Naive thymus-derived CD4-positive, alpha-beta T cell (primary cell): ENCODE measurements at regions of chr1 and their contacts with region 1.

Region 1: GRCh38 chr1:12434174-12434573 is 183.8 kb downstream of the DHRS3 start:
- DNase-seq: peak in 6 of 9 donors; percentile 32 to 70 (median 46)
- ATAC-seq: peak; percentile 79
- H3K4me3 ChIP-seq: peak overlapping the region; percentile 44
- H3K4me3 Mint-ChIP-seq: peak overlapping the region; percentile 54 to 76 (median 70)
- H3K27ac ChIP-seq: peak overlapping the region; percentile 58
- H3K27ac Mint-ChIP-seq: peak overlapping the region; percentile 69 to 92 (median 84)
- H3K4me1 ChIP-seq: peaks cover 52 to 56% of the 10 kb centered on the region in 2 donors
- H3K4me1 Mint-ChIP-seq: peaks cover 46 to 85% (median 71%) of the 10 kb centered on the region in 7 donors
- H3K27me3 ChIP-seq: no peaks in the 10 kb centered on the region
- H3K27me3 Mint-ChIP-seq: no peaks in the 10 kb centered on the region

Region 2: GRCh38 chr1:12244078-12244477 is 190.1 kb before region 1 on chr1:
- CTCF ChIA-PET with region 1: no interaction called
- POLR2A ChIA-PET with region 1: no interaction called
- intact Hi-C with region 1: no loop called
- DNase-seq: no peak
- ATAC-seq: no peak
- H3K4me3 ChIP-seq: no peak overlapping the region
- H3K4me3 Mint-ChIP-seq: no peak overlapping the region
- H3K27ac ChIP-seq: no peak overlapping the region
- H3K27ac Mint-ChIP-seq: no peak overlapping the region
- H3K4me1 ChIP-seq: no peaks in the 10 kb centered on the region
- H3K4me1 Mint-ChIP-seq: peaks cover 0 to 14% (median 6%) of the 10 kb centered on the region in 7 donors
- H3K27me3 ChIP-seq: no peaks in the 10 kb centered on the region
- H3K27me3 Mint-ChIP-seq: no peaks in the 10 kb centered on the region

Region 3: DNA sequence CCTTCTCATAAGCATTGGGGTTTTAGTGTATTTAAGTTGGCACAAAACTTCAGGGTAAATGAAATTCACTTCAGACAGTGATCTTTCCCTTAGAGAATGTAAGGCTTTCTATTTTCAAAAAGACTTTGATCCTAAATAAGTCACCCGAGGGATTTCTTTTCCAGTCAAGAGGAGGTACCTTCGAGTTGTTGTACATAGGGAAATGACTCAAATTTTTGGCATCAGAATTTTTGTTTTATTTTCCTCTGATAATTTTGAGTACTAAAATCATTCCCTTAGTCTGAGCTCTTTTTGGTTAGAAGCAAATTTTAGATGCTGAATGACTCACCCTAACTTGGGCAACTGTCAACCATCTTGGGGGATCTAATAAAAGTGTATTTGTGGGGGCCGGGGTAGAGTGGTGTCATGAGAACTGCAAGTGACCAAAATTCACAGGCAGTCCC is 10.1 kb before region 1 on chr1:
- CTCF ChIA-PET with region 1: interaction called, 4 read pairs
- POLR2A ChIA-PET with region 1: interaction called, 10 read pairs
- intact Hi-C with region 1: loop called in 1 of 2 experiments (anchors 2 kb)
- DNase-seq: no peak
- ATAC-seq: no peak
- H3K4me3 ChIP-seq: no peak overlapping the region
- H3K4me3 Mint-ChIP-seq: no peak overlapping the region
- H3K27ac ChIP-seq: no peak overlapping the region
- H3K27ac Mint-ChIP-seq: peak overlapping the region in 2 of 9 donors; percentile 43 to 57
- H3K4me1 ChIP-seq: peaks cover 0 to 4% of the 10 kb centered on the region in 2 donors
- H3K4me1 Mint-ChIP-seq: peaks cover 14 to 45% (median 31%) of the 10 kb centered on the region in 7 donors
- H3K27me3 ChIP-seq: no peaks in the 10 kb centered on the region
- H3K27me3 Mint-ChIP-seq: no peaks in the 10 kb centered on the region

Region 4: DNA sequence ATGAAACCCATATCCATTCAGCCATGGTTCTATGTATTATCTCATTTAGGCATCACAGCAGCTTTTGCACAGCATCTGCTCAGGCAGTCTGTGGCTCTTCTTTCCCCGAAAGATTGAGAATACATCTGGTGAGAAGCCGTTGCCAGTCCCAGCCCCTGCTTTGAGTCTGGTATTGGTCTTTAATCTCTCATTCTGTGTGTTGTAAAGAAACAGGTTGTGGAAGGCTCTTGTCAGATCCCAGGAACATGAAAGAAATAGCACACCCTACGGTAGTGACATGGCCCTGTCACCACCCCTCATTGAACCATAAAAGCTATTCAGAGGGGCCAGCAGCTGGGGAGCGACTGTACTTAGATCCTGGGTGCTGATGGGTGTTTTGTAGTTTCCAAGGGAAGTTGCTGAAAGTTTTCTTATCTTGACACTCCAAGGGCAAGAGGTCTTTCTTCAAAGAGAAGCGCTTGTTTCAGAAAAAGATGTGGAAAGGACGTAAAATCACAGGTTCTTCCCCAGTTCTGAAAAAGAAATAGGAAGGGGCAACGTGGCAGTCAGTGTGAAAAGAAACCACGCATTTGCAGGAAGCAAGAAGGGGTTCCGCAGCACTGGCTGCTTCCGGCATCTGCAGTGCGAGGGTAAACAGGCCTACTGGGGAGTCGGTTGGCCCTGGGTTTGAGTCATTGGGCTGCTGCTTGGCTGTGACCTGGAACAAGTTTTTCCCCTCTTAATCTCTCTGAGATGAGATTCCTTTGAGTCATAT is 38.8 kb after region 1 on chr1:
- CTCF ChIA-PET with region 1: no interaction called
- POLR2A ChIA-PET with region 1: interaction called, 17 read pairs
- intact Hi-C with region 1: loop called (anchors 1 to 2 kb)
- DNase-seq: peak in 8 of 9 donors; percentile 54 to 67 (median 60)
- ATAC-seq: peak; percentile 77
- H3K4me3 ChIP-seq: peak overlapping the region; percentile 11
- H3K4me3 Mint-ChIP-seq: peak overlapping the region; percentile 72 to 86 (median 78)
- H3K27ac ChIP-seq: peak overlapping the region; percentile 67
- H3K27ac Mint-ChIP-seq: peak overlapping the region; percentile 94 to 99 (median 96)
- H3K4me1 ChIP-seq: peaks cover 51 to 87% of the 10 kb centered on the region in 2 donors
- H3K4me1 Mint-ChIP-seq: peaks cover 53 to 96% (median 91%) of the 10 kb centered on the region in 7 donors
- H3K27me3 ChIP-seq: no peaks in the 10 kb centered on the region
- H3K27me3 Mint-ChIP-seq: no peaks in the 10 kb centered on the region

Region 5: GRCh38 chr1:12477936-12478611 is 43.9 kb after region 1 on chr1:
- CTCF ChIA-PET with region 1: no interaction called
- POLR2A ChIA-PET with region 1: interaction called, 17 read pairs
- intact Hi-C with region 1: loop called (anchors 1 to 2 kb)
- DNase-seq: peak in 1 of 9 donors; percentile 27
- ATAC-seq: peak; percentile 19
- H3K4me3 ChIP-seq: peak overlapping the region; percentile 42
- H3K4me3 Mint-ChIP-seq: peak overlapping the region; percentile 71 to 86 (median 78)
- H3K27ac ChIP-seq: peak overlapping the region; percentile 66
- H3K27ac Mint-ChIP-seq: peak overlapping the region; percentile 89 to 99 (median 96)
- H3K4me1 ChIP-seq: peaks cover 64 to 89% of the 10 kb centered on the region in 2 donors
- H3K4me1 Mint-ChIP-seq: peaks cover 58 to 97% (median 94%) of the 10 kb centered on the region in 7 donors
- H3K27me3 ChIP-seq: no peaks in the 10 kb centered on the region
- H3K27me3 Mint-ChIP-seq: no peaks in the 10 kb centered on the region

Region 6: DNA sequence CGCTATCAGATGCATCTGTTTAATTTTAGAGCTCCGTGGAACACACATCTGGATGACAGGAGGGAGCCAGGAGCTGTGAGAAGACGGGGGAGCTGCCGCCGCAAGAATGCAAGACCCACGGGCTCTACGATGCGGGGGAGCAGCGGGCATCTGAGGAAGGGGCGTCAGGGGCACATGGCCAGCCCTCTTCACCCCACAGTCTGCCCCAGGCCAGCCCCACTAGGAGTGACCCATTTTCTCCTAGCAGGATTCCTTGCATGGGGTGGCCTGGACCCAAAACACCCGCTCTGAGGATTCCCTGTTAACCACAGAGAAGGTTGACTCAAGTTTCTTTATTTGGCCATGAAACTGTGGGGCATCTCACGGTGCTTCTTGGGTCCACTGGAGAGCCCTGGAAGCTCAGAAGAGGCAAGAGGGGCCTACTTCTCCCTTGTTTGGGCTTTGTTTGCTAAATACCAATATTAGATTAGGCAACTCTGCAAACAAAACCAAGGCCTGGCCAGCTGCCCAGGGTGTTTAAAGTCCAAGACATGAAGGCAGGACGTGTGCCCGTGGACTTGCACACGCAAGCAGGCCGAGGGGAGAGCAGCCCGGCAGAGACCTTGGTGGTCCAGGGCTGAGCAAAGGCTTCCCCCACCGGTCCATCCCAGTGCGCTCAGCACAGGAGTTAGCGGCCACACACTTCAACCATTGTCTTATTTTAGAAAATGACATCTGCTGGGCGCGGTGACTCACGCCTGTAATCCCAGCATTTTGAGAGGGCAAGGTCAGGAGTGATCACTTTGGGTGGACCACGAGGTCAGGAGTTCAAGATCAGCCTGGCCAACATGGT is 94.1 kb after region 1 on chr1:
- CTCF ChIA-PET with region 1: interaction called, 11 read pairs
- POLR2A ChIA-PET with region 1: interaction called, 4 read pairs
- intact Hi-C with region 1: no loop called
- DNase-seq: no peak
- ATAC-seq: no peak
- H3K4me3 ChIP-seq: no peak overlapping the region
- H3K4me3 Mint-ChIP-seq: no peak overlapping the region
- H3K27ac ChIP-seq: no peak overlapping the region
- H3K27ac Mint-ChIP-seq: peak overlapping the region in 1 of 9 donors; percentile 46
- H3K4me1 ChIP-seq: peaks cover 0 to 4% of the 10 kb centered on the region in 2 donors
- H3K4me1 Mint-ChIP-seq: peaks cover 13 to 31% (median 20%) of the 10 kb centered on the region in 7 donors
- H3K27me3 ChIP-seq: no peaks in the 10 kb centered on the region
- H3K27me3 Mint-ChIP-seq: no peaks in the 10 kb centered on the region